Kidney (tissue), 22 donors: ENCODE measurements at regions of chr16 and their contacts with region 1.

Region 1: DNA sequence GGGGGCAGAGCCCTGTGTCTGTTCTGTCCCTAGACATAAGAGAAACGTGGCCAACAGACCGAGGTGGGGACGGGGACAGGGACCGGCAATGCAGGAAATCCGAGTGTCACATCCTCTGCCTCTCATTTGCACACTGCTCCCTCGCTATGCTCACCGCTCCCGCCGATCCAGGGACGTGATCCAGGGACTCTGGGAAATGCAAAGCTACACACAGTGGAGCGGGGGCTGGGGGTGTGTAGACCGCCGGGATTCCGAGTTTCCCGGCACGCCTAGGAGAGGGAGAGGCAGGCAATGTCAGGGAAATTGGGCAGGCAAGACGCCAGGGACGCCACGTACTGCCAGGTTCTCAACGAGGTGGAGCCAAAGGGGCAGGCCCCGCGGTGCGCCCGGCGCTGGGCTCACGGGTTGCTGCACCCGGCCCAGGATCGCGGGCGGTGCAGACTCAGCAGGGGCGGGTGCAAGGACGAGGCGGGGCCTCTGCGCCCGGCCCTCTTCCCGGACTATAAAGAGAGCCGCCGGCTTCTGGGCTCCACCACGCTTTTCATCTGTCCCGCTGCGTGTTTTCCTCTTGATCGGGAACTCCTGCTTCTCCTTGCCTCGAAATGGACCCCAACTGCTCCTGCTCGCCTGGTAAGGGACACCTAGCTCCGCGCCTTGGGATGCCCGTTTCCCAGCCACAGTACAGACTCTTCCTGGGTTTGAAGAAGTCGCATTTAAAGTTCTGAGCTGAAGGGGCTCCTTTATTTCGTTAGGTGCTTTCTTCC is at the start of gene MT1X:
- DNase-seq: peak; percentile 87 to 98 (median 93)
- H3K4me3 ChIP-seq: peak within 1 kb of the TSS; percentile 71 to 94 (median 91)
- H3K27ac ChIP-seq: peak within 1 kb of the TSS; percentile 39 to 71
- H3K4me1 ChIP-seq: peaks cover 0 to 9% (median 5%) of the 10 kb centered on the region in 3 donors
- H3K27me3 ChIP-seq: no peaks in the 10 kb centered on the region
- CTCF ChIP-seq: no peak
- total RNA-seq, gene MT1X: 223 TPM

Region 2: DNA sequence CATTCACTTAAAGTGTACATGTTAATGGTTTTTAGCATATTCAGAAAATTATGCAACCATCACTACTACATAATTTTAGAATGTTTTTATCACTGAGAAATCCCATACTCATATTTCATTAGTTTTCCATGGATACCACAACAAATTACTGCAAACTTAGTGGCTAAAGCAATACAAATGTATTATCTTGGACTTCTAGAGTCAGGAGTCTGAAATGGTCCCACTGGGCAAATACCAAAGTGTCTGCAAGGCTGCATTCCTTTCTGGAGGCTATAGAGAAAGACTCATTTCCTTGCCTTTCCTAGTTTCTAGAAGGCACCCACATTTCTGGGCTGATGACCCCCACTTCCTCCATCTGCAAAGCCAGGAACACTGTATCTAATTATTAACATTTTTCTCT is 507.7 kb before region 1 on chr16:
- intact Hi-C with region 1: no loop called
- DNase-seq: no peak
- H3K4me3 ChIP-seq: no peak overlapping the region
- H3K27ac ChIP-seq: no peak overlapping the region
- H3K4me1 ChIP-seq: no peaks in the 10 kb centered on the region
- H3K27me3 ChIP-seq: no peaks in the 10 kb centered on the region
- CTCF ChIP-seq: no peak

Region 3: GRCh38 chr16:56558024-56558747 is 123.9 kb before region 1 on chr16:
- intact Hi-C with region 1: no loop called
- DNase-seq: no peak
- H3K4me3 ChIP-seq: no peak overlapping the region
- H3K27ac ChIP-seq: no peak overlapping the region
- H3K4me1 ChIP-seq: no peaks in the 10 kb centered on the region
- H3K27me3 ChIP-seq: no peaks in the 10 kb centered on the region
- CTCF ChIP-seq: no peak

Region 4: GRCh38 chr16:56608043-56608875 is 73.9 kb before region 1 on chr16 and contains the start of gene MT2A:
- intact Hi-C with region 1: loop called (anchors 10 kb)
- DNase-seq: peak; percentile 91 to 98 (median 95)
- H3K4me3 ChIP-seq: peak within 1 kb of the TSS; percentile 65 to 94 (median 92)
- H3K27ac ChIP-seq: peak within 1 kb of the TSS; percentile 94 to 96
- H3K4me1 ChIP-seq: peaks cover 0 to 32% (median 17%) of the 10 kb centered on the region in 3 donors
- H3K27me3 ChIP-seq: no peaks in the 10 kb centered on the region
- CTCF ChIP-seq: no peak
- total RNA-seq, gene MT2A: 507 TPM